Tibial artery (tissue), 4 donors: ENCODE measurements at regions of chr1 and their contacts with region 1.

Region 1: DNA sequence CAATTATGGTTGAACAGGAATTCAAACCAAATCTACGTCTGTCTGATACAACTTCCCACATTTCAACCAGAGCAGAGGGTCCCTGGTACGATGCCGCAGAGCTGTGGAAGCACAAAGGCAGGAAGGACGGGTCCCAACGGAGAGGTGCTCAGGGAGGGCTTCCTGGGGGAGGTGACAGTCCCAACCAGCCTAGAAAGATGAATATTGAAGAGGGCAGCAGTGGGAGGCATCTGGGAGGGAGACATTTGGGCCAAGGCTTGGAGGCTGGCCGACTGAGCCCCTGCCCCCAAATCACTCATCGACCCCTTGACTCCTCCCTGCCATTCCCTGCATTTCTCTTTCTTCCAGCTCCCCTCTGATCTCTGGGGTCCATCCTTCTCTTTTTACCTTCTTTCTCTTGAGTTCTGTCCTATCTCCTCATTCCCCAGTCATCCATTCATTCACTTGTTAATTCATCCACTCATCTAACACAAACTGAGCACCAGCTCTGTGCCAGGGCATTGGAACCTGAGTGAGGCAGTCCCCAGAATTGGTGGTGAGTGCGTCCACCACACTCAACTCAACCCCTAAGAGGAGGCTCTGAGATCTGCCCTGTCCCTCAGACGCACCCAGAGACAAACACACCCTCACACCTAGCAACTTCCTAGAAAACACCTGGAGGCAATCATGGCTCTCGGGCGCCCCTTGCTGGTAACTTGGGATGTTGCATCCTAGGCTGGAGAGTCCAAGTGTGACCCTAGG is 13.2 kb upstream of the CELA3B start:
- DNase-seq: peak; percentile 76 to 83
- H3K4me3 ChIP-seq: no peak overlapping the region
- H3K27ac ChIP-seq: no peak overlapping the region
- H3K4me1 ChIP-seq: no peaks in the 10 kb centered on the region
- H3K27me3 ChIP-seq: no peaks in the 10 kb centered on the region
- CTCF ChIP-seq: peak; percentile 89 to 94

Region 2: GRCh38 chr1:21782868-21783678 is 180.6 kb before region 1 on chr1 and contains the start of gene USP48:
- intact Hi-C with region 1: loop called (anchors 10 kb)
- DNase-seq: peak; percentile 96 to 97
- H3K4me3 ChIP-seq: peak within 1 kb of the TSS; percentile 79 to 92
- H3K27ac ChIP-seq: peak within 1 kb of the TSS; percentile 89 to 98
- H3K4me1 ChIP-seq: peaks cover 0 to 32% (median 16%) of the 10 kb centered on the region in 4 donors
- H3K27me3 ChIP-seq: no peaks in the 10 kb centered on the region
- CTCF ChIP-seq: no peak